Dendritic cell treated with granulocyte-macrophage colony-stimulating factor and Interleukin-4, amounts not matched to agents 40 ng/mL and 50 ng/mL, for 4 days (primary cell): ENCODE measurements at regions of chr15 and their contacts with region 1.

Region 1: DNA sequence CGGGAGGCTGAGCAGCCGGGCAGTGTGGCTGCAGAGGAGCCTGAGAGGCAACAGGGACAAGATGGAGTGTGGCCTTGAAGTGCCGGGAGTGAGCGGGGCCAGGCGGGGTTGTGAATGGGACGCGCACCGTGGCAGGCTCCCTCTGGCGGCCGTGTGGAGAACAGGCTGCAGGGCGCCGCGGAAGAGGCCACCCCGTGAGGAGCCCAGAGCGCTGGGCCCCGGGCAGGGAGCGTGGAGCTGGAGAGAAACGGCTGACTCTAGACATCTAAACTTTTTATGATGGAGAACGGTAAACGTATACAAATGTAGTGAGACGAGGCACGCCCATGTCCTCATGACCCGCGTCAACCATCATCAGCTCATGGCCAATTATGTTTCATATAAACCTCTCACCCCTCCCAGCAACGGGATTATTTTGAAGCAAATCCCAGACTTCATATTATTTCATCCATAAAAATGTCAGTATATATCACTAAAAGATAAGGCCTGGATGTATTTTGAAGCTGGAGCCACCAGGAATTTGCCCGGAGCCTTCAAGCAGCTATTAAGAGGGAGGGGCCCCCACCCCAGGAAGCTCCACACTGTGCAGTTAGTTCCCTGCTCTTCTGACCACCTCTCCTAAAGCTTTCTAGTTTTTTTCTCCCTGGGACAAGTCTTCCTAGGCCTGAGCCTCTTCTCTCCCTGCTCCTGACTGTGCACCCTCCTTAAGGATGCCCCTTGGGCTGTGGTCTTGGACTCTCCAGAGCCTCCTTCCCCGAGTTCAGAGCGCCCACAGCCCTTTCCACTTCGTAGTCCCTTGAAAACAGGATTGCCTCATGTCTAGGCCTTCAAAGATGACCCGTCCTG is 149.4 kb downstream of the SMAD6 start:
- H3K4me3 Mint-ChIP-seq: peak overlapping the region; percentile 43
- H3K27ac Mint-ChIP-seq: peak overlapping the region; percentile 27
- H3K4me1 Mint-ChIP-seq: peaks cover 15% of the 10 kb centered on the region
- H3K27me3 Mint-ChIP-seq: peaks cover 30% of the 10 kb centered on the region

Region 2: DNA sequence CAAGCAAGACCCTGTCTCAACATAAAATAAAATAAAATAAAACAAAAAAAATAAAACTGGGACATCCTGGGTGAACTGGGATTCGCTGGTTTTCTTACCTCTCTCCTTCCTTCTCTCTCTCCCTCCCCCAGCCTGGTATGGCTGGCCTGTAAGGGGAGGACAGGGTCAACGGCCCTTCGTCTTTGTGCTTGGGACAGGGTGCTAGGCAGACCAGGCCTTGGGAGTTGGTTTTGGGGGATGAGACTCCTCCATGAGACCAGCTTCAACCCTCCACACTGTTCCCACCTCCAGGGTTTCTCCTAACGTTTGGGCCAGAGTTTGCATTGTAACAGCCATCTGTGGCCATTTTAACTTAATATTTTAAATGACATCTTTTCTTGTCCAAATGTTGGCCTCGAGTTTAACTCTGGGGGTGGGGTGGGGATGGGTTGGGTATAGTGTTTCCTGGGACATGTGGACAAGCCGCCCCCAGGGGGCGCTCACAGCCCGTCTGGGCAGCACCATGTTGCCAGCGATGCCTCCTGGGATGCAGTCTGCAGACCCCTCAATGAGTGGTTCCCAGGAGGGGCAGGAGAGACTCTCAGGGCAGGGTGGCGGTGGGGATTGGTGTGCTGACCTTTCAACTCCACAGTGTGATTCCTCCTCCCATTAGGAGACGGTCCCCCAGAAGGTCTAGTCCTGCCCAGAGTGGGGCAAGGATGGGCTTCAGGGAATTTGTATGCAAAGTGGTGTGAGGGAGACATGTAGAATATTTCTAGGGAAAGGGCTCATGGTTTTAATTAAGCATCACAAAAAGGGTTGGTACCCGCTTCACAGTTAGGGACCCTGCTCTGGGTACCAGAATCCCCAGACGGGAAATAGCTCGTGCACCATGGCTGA is 247.9 kb before region 1 on chr15:
- intact Hi-C with region 1: loop called (anchors 2 kb)
- H3K4me3 Mint-ChIP-seq: no peak overlapping the region
- H3K27ac Mint-ChIP-seq: no peak overlapping the region
- H3K4me1 Mint-ChIP-seq: peaks cover under 1% of the 10 kb centered on the region
- H3K27me3 Mint-ChIP-seq: peaks cover 10% of the 10 kb centered on the region

Region 3: GRCh38 chr15:66619151-66619903 is 232.1 kb before region 1 on chr15:
- intact Hi-C with region 1: loop called (anchors 5 kb)
- H3K4me3 Mint-ChIP-seq: no peak overlapping the region
- H3K27ac Mint-ChIP-seq: no peak overlapping the region
- H3K4me1 Mint-ChIP-seq: peaks cover 77% of the 10 kb centered on the region
- H3K27me3 Mint-ChIP-seq: peaks cover 22% of the 10 kb centered on the region

Region 4: DNA sequence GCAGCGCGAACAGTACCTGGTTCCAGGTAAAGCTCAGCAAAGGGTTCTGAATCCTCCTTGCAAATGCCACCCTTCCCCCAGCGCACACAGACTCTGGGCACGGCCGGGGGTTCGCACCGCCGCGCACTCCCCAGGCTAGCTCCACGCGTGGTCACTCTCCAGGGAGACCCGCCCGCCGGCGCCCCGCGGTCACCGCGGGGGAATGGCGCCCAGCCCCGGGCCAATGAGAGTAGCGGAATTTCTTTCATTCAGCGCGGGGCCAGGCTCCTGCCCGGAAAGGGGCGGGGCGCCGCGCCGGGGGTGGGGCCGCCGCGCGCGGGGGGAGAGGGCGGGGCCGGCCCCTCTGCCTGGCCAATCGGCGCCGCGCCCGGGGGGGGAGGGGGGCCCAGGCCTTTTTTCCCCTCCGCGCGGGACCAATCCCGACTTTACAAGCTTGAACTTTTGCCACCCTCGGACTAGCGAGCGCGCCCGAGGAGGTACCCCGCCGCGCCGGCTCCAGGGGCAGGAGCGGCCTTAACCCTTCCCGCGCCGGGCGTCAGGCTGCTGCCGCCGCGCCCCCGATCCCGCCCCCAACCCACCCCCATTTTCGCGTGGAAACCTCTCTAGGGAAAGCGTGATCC is 150.5 kb before region 1 on chr15:
- intact Hi-C with region 1: loop called (anchors 5 kb)
- H3K4me3 Mint-ChIP-seq: peak overlapping the region; percentile 83
- H3K27ac Mint-ChIP-seq: peak overlapping the region; percentile 86
- H3K4me1 Mint-ChIP-seq: peaks cover 41% of the 10 kb centered on the region
- H3K27me3 Mint-ChIP-seq: peaks cover 31% of the 10 kb centered on the region

Region 5: DNA sequence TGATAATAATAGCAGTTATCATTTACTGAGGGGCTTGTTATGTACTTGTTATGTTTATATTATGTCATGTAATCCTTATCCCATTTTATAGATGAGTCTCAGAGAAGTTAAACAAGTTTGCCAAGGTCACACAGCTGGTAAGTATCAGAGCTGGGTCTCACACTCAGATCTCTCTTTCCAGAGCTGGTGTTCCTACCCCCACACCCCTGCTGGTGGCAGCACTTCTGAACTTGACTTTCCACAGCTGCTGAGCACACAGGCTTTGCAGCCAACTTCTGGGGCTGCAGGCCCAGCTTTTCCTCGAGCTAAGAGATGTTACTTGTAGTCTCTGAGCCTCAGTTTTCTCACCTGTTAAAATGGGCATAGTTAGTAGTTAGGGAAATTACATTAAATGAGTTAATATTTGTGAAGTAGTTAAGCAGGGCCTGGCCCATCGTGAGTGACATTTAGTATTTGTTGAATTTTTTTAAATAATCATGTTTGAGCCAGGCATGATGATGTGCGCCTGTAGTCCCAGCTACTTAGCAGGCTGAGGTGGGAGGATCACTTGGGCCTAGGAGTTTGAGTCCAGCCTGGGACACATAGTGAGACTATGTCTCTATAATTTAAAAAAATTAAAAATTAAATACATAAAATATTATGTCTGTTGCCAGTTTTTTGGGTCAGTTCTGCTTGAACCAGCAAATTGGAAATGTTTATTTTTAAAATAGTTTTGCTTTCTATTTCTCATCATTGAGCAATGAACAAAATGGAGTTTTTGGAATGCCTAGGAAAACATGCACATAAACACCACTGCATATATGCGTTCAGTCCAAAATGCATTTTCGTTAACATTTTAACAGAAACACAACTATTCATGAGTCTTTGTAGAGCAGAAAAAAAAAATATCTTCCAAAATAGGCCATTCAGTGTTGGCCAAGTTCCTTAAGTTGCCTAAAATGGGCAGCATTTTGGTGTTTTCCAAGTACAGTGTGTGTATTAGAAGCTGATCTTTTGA is 62.1 kb before region 1 on chr15:
- intact Hi-C with region 1: loop called (anchors 2 kb)
- H3K4me3 Mint-ChIP-seq: no peak overlapping the region
- H3K27ac Mint-ChIP-seq: no peak overlapping the region
- H3K4me1 Mint-ChIP-seq: no peaks in the 10 kb centered on the region
- H3K27me3 Mint-ChIP-seq: no peaks in the 10 kb centered on the region

Region 6: GRCh38 chr15:66803182-66803729 is 48.2 kb before region 1 on chr15:
- intact Hi-C with region 1: loop called (anchors 5 kb)
- H3K4me3 Mint-ChIP-seq: no peak overlapping the region
- H3K27ac Mint-ChIP-seq: peak overlapping the region; percentile 74
- H3K4me1 Mint-ChIP-seq: peaks cover 41% of the 10 kb centered on the region
- H3K27me3 Mint-ChIP-seq: peaks cover 4% of the 10 kb centered on the region